ENCODE measurements at regions of chr16 and their contacts with region 1.

Region 1: DNA sequence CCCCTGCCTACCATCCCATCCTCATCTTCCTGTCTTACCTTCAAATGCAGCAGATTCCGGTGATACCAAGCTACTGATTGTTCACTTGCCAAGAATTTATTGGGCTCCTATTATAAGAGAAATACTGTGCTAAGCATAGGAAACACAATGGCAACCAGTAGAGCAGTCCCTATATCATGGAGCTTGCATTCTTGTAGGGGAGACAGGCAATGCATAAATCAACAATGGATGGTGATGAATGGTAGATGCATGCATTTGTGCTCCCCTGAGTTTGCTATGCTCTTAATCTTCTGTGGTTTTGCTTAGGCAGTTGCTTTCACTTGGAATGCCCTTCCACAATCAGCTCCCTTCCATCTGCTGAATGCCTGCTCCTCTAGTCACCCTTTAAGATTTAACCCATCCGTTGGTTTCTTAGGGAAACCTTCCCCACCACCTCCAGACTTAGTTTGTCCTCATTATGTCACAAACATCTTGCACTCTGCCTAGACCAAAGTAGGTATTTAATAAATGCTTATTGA is 200.2 kb upstream of the TOX3 start:
- DNase-seq: no peak
- H3K4me3 ChIP-seq: no peak overlapping the region
- CTCF ChIP-seq: no peak
- POLR2A ChIP-seq: no peak

Region 2: DNA sequence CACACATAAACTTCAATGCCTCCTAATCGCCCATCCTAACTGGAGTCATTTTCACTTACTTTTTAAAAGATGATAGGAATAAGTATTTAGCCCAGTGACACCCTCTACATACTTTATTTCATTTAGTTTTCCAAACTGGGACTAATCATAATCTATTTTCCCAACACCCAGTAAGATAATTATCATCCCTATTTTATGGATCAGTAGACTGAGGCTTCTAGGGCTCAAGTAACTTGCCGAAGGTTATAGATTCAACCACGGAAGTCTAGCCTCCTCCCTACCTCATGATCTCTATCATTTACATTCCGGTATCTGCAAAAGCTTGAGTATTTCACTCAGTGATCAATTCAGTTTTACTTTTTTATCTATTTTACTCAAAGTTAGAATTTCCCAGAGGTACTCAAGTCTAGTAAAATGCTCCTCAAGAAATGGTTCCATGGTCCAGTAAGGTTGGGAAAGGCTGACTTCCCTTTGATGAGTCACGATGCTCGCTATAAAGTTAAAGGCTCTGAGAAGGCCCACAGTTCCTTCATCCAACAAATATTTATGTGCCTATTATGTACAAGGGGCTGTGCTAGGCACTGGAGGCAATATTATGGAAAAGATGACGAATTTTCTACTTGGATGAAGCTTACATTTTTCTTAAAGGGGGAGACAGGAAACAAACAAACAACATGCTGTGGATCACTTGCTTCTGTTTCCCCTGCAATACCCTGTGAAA is 275.3 kb before region 1 on chr16:
- intact Hi-C with region 1: no loop called
- DNase-seq: no peak
- H3K4me3 ChIP-seq: no peak overlapping the region
- CTCF ChIP-seq: no peak
- POLR2A ChIP-seq: no peak

Region 3: DNA sequence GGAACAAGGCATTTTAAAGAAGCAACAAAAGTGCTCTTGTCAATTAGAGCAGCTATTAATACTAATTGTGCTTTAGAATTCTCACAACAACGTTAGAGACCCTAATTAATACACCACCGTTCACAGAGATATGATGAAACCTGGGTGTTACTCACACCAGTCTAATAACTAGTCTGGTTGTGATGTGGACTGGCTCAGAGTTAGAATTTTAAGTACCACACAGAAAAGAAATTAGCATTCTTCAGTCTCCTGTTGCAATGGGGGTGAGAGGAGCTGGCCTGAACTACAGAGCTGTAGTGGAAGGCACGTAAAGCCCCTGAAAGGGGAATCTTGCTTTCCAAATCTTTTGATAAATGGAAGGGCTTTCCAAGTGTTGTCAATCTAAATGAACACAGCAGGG is 40.6 kb after region 1 on chr16:
- intact Hi-C with region 1: loop called (anchors 2 kb)
- DNase-seq: no peak
- H3K4me3 ChIP-seq: no peak overlapping the region
- CTCF ChIP-seq: no peak
- POLR2A ChIP-seq: no peak

Region 4: DNA sequence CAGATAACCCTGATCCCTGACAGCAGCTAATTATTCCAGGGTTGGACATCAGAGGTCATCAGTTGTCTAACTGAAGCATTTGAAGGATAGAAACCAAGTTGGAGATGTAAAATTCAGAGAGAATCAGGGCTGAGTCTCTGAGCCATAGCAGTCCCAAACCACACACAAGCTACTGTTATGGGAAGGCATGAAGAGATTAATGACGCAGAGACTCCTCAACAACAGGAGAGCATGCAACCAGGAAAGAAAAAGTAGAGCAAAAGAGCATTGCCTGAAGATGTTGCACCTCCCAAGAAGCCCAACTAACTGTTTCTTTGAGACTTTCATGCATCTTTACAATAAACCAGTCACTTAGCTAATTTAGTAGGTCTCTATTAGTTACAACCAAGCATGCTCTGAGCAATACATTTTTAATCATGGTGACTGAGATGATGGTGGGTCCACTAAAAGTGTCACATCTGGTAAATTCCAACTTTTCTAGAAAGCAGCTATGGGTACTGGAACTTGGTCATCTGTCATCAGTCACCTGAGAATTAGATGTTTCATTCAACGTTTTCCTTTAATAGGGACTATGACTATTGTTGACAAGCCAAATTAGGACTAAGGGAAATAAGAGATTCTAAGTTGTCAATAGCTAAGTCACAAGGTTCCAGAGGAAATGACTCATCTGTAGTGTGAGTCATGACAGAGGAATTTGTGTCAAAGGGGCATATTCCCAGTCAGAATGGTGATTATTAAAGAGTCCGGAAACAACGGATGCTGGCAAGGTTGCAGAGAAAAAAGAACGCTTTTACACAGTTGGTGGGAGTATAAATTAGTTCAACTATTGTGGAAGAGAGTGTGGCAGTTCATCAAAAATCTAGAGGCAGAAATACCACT is 65.8 kb after region 1 on chr16:
- intact Hi-C with region 1: no loop called
- DNase-seq: no peak
- H3K4me3 ChIP-seq: no peak overlapping the region
- CTCF ChIP-seq: no peak
- POLR2A ChIP-seq: no peak

Measured in lower leg skin (tissue), 4 donors.